CD4-positive, alpha-beta memory T cell (primary cell): ENCODE measurements at regions of chr2 and their contacts with region 1.

Region 1: GRCh38 chr2:70115646-70116442 is 28.6 kb downstream of the PCBP1 start:
- DNase-seq: no peak
- H3K4me3 ChIP-seq: no peak overlapping the region
- H3K4me3 Mint-ChIP-seq: no peak overlapping the region
- H3K27ac ChIP-seq: no peak overlapping the region
- H3K27ac Mint-ChIP-seq: peak overlapping the region in 1 of 7 donors; percentile 4
- H3K4me1 ChIP-seq: peaks cover 40% of the 10 kb centered on the region
- H3K4me1 Mint-ChIP-seq: peaks cover 21 to 37% (median 28%) of the 10 kb centered on the region in 4 donors
- H3K27me3 ChIP-seq: no peaks in the 10 kb centered on the region
- H3K27me3 Mint-ChIP-seq: no peaks in the 10 kb centered on the region

Region 2: GRCh38 chr2:70094978-70095719 is 20.7 kb before region 1 on chr2:
- CTCF ChIA-PET with region 1: interaction called, 5 read pairs
- POLR2A ChIA-PET with region 1: interaction called, 2,231 read pairs
- intact Hi-C with region 1: no loop called
- DNase-seq: peak; percentile 69 to 77 (median 74)
- H3K4me3 ChIP-seq: peak overlapping the region; percentile 2 to 23
- H3K4me3 Mint-ChIP-seq: peak overlapping the region; percentile 78 to 90 (median 84)
- H3K27ac ChIP-seq: peak overlapping the region; percentile 76
- H3K27ac Mint-ChIP-seq: peak overlapping the region; percentile 85 to 100 (median 97)
- H3K4me1 ChIP-seq: peaks cover 44% of the 10 kb centered on the region
- H3K4me1 Mint-ChIP-seq: peaks cover 36 to 55% (median 43%) of the 10 kb centered on the region in 4 donors
- H3K27me3 ChIP-seq: no peaks in the 10 kb centered on the region
- H3K27me3 Mint-ChIP-seq: no peaks in the 10 kb centered on the region